Kidney (tissue), 22 donors: ENCODE measurements at regions of chr6 and their contacts with region 1.

Region 1: DNA sequence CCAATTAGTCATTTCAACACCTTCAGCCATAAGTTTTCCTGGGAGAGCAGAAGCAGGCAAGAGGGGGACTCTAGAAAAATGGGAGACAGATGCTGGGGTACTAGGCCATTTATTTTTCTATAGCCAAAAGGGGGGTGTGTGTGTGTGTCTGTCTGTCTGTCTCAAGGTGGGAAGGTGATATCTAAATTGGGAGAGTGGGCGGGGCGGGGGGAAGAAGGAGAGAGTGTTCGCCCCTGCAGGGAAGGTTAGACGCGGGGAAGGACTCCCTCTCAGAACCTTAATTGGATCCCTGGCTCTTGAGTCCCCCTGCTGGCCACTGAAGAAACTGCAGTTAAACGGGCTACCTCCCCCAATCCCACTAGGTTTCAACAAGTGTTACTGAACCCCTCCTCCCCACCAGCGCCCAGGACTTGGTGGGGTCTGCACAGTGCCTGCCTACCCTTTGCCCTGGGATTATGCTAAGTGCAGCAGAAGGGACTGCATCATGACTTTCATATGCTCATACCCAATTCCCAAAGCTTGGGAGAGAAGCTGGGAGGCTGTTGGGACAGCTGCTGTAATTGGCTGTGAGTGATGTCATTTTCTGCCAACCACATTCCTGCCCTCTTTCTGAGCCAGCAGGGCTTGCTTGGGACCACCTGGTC is 45.8 kb downstream of the FOXP4 start:
- DNase-seq: peak; percentile 80 to 90 (median 84)
- H3K4me3 ChIP-seq: no peak overlapping the region
- H3K27ac ChIP-seq: no peak overlapping the region
- H3K4me1 ChIP-seq: no peaks in the 10 kb centered on the region
- H3K27me3 ChIP-seq: no peaks in the 10 kb centered on the region
- CTCF ChIP-seq: peak; percentile 93

Region 2: DNA sequence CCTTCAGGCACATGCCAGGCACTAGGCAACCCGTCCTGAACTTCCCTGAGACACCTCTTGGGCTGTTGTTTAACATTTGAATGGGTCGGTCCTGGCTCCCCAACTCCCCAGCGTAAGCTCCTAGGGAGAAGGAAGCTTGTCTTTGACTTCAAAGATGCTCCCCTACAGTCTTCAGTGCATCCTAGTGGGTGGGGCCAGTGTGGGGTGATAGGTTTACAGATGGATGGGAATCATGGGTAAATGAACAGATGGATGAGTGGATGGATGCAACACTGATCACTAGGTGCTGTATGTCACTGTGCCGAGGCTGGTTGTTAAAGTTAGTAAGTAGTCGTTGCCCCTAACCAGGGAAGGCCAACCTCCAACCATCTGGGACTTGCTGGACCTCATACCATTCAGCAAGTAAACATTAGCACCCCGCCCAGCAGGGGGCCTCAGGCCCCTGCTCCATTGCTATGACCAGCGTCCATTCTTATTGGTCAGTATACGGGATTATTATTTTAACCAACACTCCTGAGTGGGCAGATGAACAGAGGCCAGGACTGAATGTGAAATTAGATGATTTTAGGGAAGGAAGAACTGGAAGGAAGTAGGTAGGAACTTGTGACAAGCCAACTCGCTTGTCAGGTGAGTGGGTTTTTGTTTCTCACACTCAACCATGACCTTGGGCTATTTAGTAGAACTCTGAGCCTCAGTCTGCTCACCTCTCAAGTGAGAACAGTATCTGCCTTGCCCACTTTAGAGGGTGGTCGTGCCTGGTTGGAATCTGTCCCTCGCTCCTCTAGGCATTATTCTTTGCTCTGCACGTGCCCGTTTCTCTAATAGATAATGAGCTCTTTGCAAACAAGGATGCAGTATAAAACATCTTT is 128.7 kb before region 1 on chr6:
- intact Hi-C with region 1: loop called (anchors 10 kb)
- DNase-seq: peak in 4 of 5 donors; percentile 79 to 84 (median 82)
- H3K4me3 ChIP-seq: no peak overlapping the region
- H3K27ac ChIP-seq: no peak overlapping the region
- H3K4me1 ChIP-seq: no peaks in the 10 kb centered on the region
- H3K27me3 ChIP-seq: peaks cover 7% of the 10 kb centered on the region
- CTCF ChIP-seq: peak; percentile 73